Prostate gland (tissue), 2 donors: ENCODE measurements at regions of chr1 and their contacts with region 1.

Region 1: DNA sequence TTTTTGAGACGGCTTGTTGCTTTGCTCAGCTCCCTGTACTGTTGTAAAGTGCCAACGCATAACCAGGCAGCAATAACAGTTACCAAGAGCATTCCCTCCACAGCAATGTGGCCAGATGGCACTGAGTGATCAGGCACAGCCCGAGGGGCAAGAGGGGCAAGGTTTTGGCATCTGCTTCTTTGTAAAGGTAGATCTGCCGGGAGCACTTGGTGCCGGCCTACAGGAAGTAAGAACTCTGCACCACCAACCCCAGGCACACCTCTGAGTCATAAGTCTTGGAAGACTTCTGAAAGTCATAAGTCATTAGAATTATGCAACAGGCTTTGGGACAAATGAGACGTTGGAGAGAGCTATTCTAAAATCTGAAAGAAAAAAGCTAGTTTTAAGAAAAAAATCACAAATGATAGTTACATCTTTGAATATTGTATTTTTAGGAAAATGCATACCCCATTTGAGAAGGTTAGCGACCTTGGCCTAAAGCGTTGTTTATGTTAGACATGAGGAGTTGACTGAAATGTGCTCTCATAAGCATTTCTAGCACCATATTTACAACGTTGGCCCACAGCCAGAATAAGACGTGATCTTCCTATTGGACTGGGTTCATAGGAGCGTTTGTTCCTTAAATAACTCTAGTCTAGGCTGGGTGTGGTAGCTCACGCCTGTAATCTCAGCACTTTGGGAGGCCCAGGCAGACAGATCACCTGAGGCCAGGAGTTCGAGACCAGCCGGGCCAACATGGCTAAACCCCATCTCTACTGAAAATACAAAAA is 37.7 kb upstream of the MAP10 start:
- DNase-seq: peak; percentile 74
- H3K4me3 ChIP-seq: no peak overlapping the region
- H3K27ac ChIP-seq: peak overlapping the region; percentile 59 to 77
- H3K4me1 ChIP-seq: no peaks in the 10 kb centered on the region
- H3K27me3 ChIP-seq: no peaks in the 10 kb centered on the region
- CTCF ChIP-seq: no peak
- POLR2A ChIP-seq: no peak

Region 2: DNA sequence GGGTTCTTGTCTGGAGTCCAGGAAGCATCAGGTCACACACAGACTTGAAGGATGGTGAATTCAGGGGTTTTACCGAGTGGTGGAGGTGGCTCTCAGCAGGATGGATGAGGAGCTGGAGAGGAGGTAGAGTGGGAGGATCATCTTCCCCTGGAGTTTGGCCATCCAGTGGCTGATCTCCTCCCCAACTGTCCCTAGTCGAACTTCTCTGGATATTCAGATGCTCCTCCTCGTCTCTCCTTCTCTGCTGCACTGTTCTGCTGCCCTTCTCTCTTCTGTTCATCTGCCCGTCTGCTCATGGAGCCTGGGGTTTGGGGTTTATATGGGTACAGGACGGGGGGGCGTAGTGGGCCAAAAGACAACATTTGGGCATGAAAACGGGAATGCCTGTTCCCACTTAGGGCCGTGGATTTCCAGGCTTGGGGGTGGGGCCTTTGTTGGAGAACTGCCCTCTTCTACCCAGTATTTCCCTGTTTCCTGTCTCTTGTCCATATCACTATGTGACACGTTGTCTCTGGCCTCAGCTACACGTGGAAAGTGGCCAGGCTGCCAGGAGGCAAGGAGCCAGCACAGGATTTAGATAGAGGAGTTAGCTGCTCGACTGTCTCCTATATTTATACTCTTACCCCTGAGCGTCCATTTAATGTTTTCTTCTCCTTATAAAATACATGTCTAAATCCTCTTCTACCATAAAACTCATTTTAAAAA is 214.3 kb before region 1 on chr1:
- intact Hi-C with region 1: no loop called
- DNase-seq: no peak
- H3K4me3 ChIP-seq: no peak overlapping the region
- H3K27ac ChIP-seq: no peak overlapping the region
- H3K4me1 ChIP-seq: no peaks in the 10 kb centered on the region
- H3K27me3 ChIP-seq: no peaks in the 10 kb centered on the region
- CTCF ChIP-seq: no peak
- POLR2A ChIP-seq: no peak

Region 3: GRCh38 chr1:232704694-232705680 is 62.5 kb before region 1 on chr1:
- intact Hi-C with region 1: loop called (anchors 2 kb)
- DNase-seq: peak; percentile 86
- H3K4me3 ChIP-seq: no peak overlapping the region
- H3K27ac ChIP-seq: peak overlapping the region; percentile 60 to 82
- H3K4me1 ChIP-seq: no peaks in the 10 kb centered on the region
- H3K27me3 ChIP-seq: no peaks in the 10 kb centered on the region
- CTCF ChIP-seq: no peak
- POLR2A ChIP-seq: no peak